ENCODE measurements at regions of chr4 and their contacts with region 1.

Region 1: DNA sequence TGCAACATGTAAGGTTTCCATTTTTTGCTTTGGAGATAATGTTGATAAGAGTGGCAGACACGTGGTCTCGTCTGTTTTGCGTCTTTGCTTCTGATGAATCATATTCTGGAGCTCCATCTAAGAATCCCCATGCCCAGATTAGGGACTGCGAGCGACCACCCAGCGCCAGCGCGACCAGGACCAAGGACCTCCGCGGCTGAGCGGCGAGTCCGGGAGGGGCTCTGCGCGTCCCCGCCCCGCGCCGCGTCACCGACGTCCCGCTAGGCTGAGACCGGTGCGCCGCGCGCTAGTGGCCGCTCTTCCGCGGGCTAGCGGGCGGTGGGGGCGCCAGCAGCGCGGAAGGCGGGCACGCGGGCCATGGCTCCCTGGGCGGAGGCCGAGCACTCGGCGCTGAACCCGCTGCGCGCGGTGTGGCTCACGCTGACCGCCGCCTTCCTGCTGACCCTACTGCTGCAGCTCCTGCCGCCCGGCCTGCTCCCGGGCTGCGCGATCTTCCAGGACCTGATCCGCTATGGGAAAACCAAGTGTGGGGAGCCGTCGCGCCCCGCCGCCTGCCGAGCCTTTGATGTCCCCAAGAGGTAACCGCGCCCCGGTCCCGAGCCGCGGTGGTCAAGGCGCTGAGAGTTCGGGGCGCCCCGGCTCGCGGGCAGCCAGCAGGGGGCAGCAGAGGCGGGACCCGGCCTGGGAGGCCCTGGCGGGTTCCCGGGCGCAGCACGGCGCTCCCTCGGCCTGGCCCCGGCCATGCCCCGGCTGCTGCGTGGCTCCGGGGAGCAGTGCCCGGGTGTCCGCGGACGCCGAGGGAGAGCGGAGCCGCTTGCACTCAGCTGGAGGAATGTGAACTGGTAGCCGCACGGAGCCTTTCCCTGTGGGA is at the start of gene SRD5A3:
- DNase-seq: peak; percentile 97
- H3K4me3 ChIP-seq: peak within 1 kb of the TSS; percentile 66 to 77 (median 69)
- H3K27ac ChIP-seq: peak within 1 kb of the TSS; percentile 89 to 98 (median 94)
- H3K4me1 ChIP-seq: peaks cover 7 to 32% (median 17%) of the 10 kb centered on the region in 6 donors
- H3K27me3 ChIP-seq: no peaks in the 10 kb centered on the region
- CTCF ChIP-seq: peak; percentile 74 to 99 (median 95)
- POLR2A ChIP-seq: peak in 1 of 3 donors; percentile 11
- total RNA-seq, gene SRD5A3: 2.8 to 11.1 (median 6.2) TPM

Region 2: DNA sequence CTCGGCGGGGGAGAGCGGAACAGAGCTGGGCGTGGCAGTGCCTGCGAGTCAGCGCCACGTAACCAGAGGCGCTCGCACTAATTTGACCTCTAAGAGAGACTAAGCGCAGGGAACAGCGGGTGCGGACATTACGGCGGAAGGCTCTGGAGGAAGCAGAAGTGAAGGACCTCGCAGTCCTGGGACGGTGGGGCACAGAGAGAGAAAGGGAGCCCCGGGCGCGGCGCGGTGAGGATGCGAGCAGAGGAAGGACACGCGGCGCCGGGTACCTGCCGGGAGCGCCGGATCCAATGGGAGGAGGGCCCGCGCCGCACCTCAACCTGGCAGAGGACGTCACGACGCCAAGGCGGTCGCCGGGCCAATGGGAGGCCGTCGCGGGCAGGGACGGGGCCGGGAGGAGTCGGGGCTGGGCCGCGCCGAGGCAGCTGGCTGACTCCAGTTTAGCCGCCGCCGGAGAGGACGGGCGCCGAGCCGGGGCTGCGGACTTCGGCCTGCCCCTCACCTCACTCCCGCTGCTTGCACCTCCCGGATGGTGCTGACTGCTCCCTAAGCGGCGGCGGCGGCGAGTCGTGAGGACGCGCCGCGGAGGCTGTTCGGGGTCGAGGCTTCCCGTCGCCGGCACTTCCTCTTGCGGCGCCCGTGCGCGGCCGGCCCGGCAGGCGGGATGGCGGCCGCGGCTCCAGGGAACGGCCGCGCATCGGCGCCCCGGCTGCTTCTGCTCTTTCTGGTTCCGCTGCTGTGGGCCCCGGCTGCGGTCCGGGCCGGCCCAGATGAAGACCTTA is 49.5 kb after region 1 on chr4 and contains the start of gene TMEM165:
- intact Hi-C with region 1: loop called (anchors 10 kb)
- DNase-seq: peak; percentile 98
- H3K4me3 ChIP-seq: peak within 1 kb of the TSS; percentile 74 to 95 (median 87)
- H3K27ac ChIP-seq: peak within 1 kb of the TSS; percentile 95 to 100 (median 98)
- H3K4me1 ChIP-seq: peaks cover 13 to 48% (median 42%) of the 10 kb centered on the region in 6 donors
- H3K27me3 ChIP-seq: no peaks in the 10 kb centered on the region
- CTCF ChIP-seq: peak in 4 of 11 experiments; percentile 26 to 41 (median 34)
- POLR2A ChIP-seq: peak in 2 of 3 donors; percentile 67 to 85
- total RNA-seq, gene TMEM165: 94.8 to 193 (median 160) TPM

Region 3: GRCh38 chr4:55409468-55410171 is 63.4 kb after region 1 on chr4:
- intact Hi-C with region 1: no loop called
- DNase-seq: no peak
- H3K4me3 ChIP-seq: no peak overlapping the region
- H3K27ac ChIP-seq: peak overlapping the region in 2 of 8 donors; percentile 21 to 29
- H3K4me1 ChIP-seq: peaks cover 5 to 65% (median 43%) of the 10 kb centered on the region in 6 donors
- H3K27me3 ChIP-seq: no peaks in the 10 kb centered on the region
- CTCF ChIP-seq: peak in 6 of 11 experiments; percentile 10 to 38 (median 20)
- POLR2A ChIP-seq: no peak

Region 4: DNA sequence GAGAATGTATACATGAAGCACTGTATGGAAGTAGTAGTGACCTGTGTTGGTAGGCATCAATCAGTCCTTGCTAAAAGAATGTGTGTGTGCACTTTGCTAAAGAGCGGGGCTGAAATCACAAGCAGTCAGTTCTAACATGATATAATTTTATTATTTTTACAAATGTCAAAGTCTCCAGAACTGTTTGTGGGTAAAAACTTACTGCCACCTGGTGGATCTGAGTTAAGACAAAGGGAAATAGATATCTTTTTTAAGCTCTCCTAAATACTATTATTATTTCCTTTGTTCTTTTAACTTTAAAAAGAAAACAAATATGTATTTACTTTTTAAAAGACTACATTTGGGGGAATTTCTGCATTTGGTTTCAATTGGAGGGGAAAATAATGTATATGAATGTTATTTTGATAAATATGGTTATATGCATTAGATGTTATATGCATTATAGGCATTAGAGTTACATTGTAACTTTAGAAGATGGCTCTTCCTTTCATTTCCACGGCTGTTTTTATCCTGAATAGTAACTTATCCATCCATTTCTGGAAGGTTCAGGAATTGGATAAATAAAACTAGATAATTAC is 208.3 kb after region 1 on chr4:
- intact Hi-C with region 1: loop called (anchors 5 kb)
- DNase-seq: no peak
- H3K4me3 ChIP-seq: no peak overlapping the region
- H3K27ac ChIP-seq: no peak overlapping the region
- H3K4me1 ChIP-seq: peaks cover 0 to 12% (median 3%) of the 10 kb centered on the region in 6 donors
- H3K27me3 ChIP-seq: peaks cover 0 to 7% (median 0%) of the 10 kb centered on the region in 7 donors
- CTCF ChIP-seq: peak in 8 of 11 experiments; percentile 5 to 51 (median 34)
- POLR2A ChIP-seq: no peak